ENCODE measurements at regions of chr4 and their contacts with region 1.

Region 1: GRCh38 chr4:40289366-40290188 is 45.6 kb upstream of the CHRNA9 start:
- DNase-seq: peak; percentile 33
- H3K4me3 Mint-ChIP-seq: peak overlapping the region; percentile 24
- H3K27ac Mint-ChIP-seq: peak overlapping the region; percentile 85
- H3K4me1 Mint-ChIP-seq: peaks cover 62% of the 10 kb centered on the region
- H3K27me3 Mint-ChIP-seq: no peaks in the 10 kb centered on the region

Region 2: DNA sequence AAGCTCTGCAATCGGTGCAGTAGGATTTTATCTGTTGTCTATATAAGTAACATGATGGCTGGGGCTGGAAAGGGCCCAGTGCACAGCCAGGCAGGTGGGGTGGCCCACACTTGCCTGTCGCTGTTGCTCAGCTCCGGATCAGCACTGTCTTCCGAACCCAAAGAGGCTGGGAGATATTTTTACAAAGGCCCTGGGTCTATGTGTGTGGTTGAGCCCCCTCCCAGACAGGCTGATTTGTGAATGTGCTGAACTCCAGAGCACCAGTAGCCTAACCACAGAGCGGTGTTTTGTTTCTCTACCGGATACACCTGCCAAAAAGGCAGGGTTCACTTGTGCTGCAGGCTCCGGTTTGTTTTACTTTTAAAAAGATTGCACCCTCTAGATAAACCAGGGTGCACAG is 12.0 kb after region 1 on chr4:
- CTCF ChIA-PET with region 1: interaction called, 14 read pairs
- DNase-seq: peak; percentile 88
- H3K4me3 Mint-ChIP-seq: peak overlapping the region; percentile 52
- H3K27ac Mint-ChIP-seq: peak overlapping the region; percentile 95
- H3K4me1 Mint-ChIP-seq: peaks cover 84% of the 10 kb centered on the region
- H3K27me3 Mint-ChIP-seq: no peaks in the 10 kb centered on the region

Measured in activated naive CD4-positive, alpha-beta T cell treated with anti-CD3 and anti-CD28 coated beads, Interleukin-2, amount 10 ng/mL, durations not matched to agents 7 days and 5 days (primary cell).